ENCODE measurements at regions of chr12 and their contacts with region 1.

Region 1: GRCh38 chr12:118404876-118405521 is 28.6 kb downstream of the SUDS3 start:
- DNase-seq: no peak
- H3K4me3 ChIP-seq: no peak overlapping the region
- H3K27ac ChIP-seq: no peak overlapping the region
- H3K4me1 ChIP-seq: no peaks in the 10 kb centered on the region
- H3K27me3 ChIP-seq: no peaks in the 10 kb centered on the region
- CTCF ChIP-seq: peak; percentile 38 to 74 (median 59)
- POLR2A ChIP-seq: no peak

Region 2: GRCh38 chr12:118498181-118498580 is 93.2 kb after region 1 on chr12:
- intact Hi-C with region 1: no loop called
- DNase-seq: no peak
- H3K4me3 ChIP-seq: no peak overlapping the region
- H3K27ac ChIP-seq: no peak overlapping the region
- H3K4me1 ChIP-seq: no peaks in the 10 kb centered on the region
- H3K27me3 ChIP-seq: no peaks in the 10 kb centered on the region
- CTCF ChIP-seq: no peak
- POLR2A ChIP-seq: no peak

Region 3: DNA sequence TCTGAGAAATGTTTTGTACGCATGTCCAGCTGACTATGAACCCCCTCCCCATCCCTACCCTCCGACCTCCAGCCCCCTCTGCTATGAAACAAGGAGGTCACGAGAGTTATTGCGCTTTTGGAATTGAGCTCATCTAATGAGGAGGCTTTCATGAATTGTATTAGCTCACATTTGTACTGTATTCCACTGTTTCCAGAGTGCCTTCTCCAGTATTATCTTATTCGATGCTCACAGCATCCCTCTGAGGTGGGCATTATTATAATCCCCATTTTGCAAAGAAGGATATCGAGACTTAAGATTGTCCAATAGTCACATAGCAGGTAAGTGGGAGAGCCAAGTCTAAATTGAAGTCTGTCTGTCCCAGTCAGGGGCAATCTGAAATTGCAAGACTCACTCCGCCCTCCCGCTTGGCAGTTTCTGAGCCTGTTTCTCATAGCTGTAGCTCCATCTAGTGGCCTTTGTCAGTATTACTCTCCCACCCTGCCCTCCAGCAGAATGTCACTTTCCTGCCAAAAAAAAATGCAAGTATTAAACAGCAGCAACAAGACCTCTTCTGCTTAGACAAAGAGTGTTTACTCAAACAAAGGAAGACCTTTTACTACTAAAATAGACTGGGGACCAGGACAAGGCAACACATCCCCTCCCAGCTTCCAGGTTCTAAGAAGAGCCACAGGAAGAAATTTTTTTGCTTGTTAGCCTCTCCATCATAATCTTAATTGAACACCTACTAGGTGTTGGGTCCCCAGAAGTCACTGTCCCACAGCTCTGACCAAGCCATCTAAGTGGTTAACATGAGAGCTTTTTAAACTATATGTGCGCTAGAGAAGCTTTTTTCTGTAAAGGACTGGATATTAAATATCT is 1140.0 kb after region 1 on chr12:
- intact Hi-C with region 1: loop called (anchors 10 kb)
- DNase-seq: no peak
- H3K4me3 ChIP-seq: no peak overlapping the region
- H3K27ac ChIP-seq: no peak overlapping the region
- H3K4me1 ChIP-seq: no peaks in the 10 kb centered on the region
- H3K27me3 ChIP-seq: peaks cover 0 to 16% (median 0%) of the 10 kb centered on the region in 4 donors
- CTCF ChIP-seq: peak; percentile 64 to 88 (median 83)
- POLR2A ChIP-seq: no peak